Vagina (tissue), 2 donors: ENCODE measurements at regions of chr18 and their contacts with region 1.

Region 1: GRCh38 chr18:53874103-53874502 is 350.4 kb downstream of the MBD2 start:
- DNase-seq: no peak
- H3K4me3 ChIP-seq: no peak overlapping the region
- H3K27ac ChIP-seq: no peak overlapping the region
- H3K4me1 ChIP-seq: no peaks in the 10 kb centered on the region
- H3K27me3 ChIP-seq: no peaks in the 10 kb centered on the region
- CTCF ChIP-seq: no peak
- POLR2A ChIP-seq: no peak

Region 2: GRCh38 chr18:53838746-53839145 is 35.4 kb before region 1 on chr18:
- intact Hi-C with region 1: loop called (anchors 1 kb)
- DNase-seq: no peak
- H3K4me3 ChIP-seq: no peak overlapping the region
- H3K27ac ChIP-seq: no peak overlapping the region
- H3K4me1 ChIP-seq: no peaks in the 10 kb centered on the region
- H3K27me3 ChIP-seq: no peaks in the 10 kb centered on the region
- CTCF ChIP-seq: no peak
- POLR2A ChIP-seq: no peak